ENCODE measurements at regions of chr10 and their contacts with region 1.

Region 1: DNA sequence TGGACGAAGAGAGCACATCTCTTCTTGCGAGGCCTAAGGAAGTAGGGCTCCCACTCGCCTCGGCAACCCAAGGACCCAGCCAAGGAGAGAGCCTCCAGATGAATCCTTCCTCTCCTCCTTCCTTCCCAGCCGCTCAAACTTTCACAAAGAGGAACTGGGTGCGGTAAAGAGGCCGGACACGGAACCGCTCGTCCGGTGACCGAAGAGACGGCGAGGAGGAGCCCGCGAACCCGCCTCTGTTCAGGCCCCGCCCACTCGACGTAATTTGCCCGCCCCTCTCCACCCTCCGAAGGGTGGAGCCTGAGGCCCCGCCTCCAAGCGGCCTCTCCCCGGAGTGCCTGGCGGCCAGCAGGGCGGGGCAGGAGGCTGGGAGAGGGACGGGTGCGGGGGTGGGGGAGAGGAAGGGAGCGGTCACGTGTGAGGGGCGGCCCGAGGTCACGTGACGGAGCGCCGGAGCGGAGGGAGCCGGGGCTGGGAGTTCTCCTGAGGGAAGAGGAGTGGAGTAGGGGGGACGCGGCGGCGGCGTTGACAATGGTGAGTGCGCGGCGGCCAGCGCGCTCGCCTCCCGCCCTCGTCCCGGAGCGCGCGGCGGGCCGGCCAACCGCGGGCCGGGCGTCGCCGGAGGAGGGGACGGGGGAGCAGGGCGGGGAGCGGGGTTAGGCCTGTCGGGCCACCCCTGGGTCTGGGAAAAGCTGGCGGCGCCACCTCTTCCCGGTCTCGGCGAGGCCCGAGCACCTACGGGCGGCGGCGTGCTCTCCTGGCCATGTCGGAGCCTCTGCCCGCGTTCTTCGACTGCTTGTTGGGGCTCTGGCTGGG is at the start of gene VPS26A:
- DNase-seq: peak; percentile 99
- H3K4me3 Mint-ChIP-seq: peak within 1 kb of the TSS; percentile 87
- H3K27ac Mint-ChIP-seq: peak within 1 kb of the TSS; percentile 88
- H3K4me1 Mint-ChIP-seq: peaks cover 21% of the 10 kb centered on the region
- H3K27me3 Mint-ChIP-seq: no peaks in the 10 kb centered on the region
- total RNA-seq, gene VPS26A: 24.7 and 24.8 TPM in 2 replicates

Region 2: DNA sequence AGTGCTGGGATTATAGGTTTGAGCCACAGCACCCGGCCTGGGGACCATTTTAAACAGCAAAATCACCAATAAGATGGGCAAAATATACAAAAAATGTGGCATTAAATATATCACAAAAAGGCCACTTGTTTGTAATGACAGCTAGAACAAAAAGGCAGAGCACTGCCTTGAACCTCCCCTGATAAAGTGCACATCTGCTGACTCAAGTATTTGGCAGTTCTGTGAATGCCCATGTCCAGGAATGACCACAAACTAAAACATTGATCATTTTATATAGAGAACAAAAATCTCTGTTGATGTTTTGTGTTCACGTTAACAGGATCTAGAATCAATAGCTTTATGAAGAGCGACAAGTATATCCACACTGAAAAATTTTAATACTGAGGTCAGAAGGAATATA is 1070.4 kb before region 1 on chr10:
- intact Hi-C with region 1: no loop called
- DNase-seq: no peak
- H3K4me3 Mint-ChIP-seq: no peak overlapping the region
- H3K27ac Mint-ChIP-seq: no peak overlapping the region
- H3K4me1 Mint-ChIP-seq: peaks cover 16% of the 10 kb centered on the region
- H3K27me3 Mint-ChIP-seq: no peaks in the 10 kb centered on the region

Region 3: DNA sequence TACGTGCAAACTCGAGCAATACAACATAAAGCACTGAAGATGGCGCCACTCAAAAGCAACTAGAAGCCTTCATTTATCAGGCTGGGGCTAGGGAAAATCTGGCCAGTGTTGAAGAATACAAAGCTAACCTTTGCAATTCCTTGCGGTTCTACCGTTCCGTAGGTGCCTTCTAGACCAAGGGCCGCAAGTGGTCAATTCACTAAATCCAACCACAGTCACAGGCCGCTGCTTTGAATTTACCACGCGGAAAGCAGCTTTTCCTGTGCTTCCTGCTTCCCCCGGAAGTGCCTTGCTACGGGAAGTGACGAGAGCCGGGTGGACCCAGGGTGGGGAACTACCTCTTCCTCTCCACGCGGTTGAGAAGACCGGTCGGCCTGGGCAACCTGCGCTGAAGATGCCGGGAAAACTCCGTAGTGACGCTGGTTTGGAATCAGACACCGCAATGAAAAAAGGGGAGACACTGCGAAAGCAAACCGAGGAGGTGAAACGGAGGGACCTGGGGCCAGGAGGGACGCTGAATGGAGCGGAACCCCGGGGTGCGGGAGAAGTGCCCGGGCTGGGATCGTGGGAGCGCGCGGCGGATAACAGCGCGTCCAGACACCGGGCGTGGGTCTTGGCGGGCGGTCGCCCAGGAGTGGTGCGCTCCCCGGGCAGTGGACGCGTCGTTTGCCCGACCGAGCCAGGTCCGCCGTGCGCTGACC is 168.0 kb before region 1 on chr10 and contains the start of gene DDX21:
- intact Hi-C with region 1: loop called (anchors 1 kb)
- DNase-seq: peak; percentile 87
- H3K4me3 Mint-ChIP-seq: peak within 1 kb of the TSS; percentile 99
- H3K27ac Mint-ChIP-seq: peak within 1 kb of the TSS; percentile 99
- H3K4me1 Mint-ChIP-seq: peaks cover 25% of the 10 kb centered on the region
- H3K27me3 Mint-ChIP-seq: no peaks in the 10 kb centered on the region
- total RNA-seq, gene DDX21: 267 and 278 TPM in 2 replicates

Region 4: GRCh38 chr10:68997211-68997610 is 126.7 kb before region 1 on chr10:
- intact Hi-C with region 1: loop called (anchors 2 kb)
- DNase-seq: no peak
- H3K4me3 Mint-ChIP-seq: peak overlapping the region; percentile 16
- H3K27ac Mint-ChIP-seq: peak overlapping the region; percentile 86
- H3K4me1 Mint-ChIP-seq: peaks cover 35% of the 10 kb centered on the region
- H3K27me3 Mint-ChIP-seq: no peaks in the 10 kb centered on the region

Region 5: GRCh38 chr10:69045441-69046300 is 78.3 kb before region 1 on chr10:
- intact Hi-C with region 1: loop called (anchors 1 kb)
- DNase-seq: peak; percentile 42
- H3K4me3 Mint-ChIP-seq: peak overlapping the region; percentile 76
- H3K27ac Mint-ChIP-seq: peak overlapping the region; percentile 99
- H3K4me1 Mint-ChIP-seq: peaks cover 54% of the 10 kb centered on the region
- H3K27me3 Mint-ChIP-seq: no peaks in the 10 kb centered on the region

Region 6: DNA sequence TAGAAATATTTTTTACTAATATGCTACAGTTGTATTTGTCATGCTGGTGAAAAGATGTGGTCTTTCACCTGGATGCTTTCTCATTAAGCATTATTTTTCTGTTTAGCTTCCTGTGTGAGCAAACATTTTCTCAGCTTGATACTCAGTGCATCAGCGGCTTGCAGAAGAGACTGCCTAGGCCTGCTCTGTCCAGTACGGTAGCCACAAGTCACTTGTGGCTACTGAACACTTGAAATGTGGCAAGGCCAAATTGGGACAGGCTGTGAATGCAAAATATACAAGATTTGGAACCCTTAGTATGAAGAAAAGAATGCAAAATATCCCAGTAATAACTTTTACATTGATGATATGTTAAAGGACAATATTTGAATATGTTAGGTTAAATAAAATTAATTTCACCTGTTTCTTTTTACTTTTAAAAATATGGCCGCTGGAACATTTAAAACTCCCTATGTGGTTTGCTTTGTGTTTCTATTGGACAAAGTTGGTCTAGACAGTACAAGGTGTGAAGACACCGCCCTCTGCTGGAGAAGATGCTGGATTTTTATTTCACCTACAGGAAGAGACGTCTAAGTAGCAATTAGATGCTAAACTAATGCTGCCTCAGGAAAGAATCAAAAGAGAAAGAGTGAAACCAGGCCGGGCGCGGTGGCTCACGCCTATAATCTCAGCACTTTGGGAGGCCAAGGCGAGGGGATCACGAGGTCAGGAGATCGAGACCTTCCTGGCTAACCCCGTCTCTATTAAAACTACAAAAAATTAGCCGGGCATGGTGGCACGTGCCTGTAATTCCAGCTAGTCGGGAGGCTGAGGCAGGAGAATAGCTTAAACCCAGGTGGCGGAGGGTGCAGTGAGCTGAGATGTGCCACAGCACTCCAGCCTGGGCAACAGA is 30.8 kb before region 1 on chr10:
- intact Hi-C with region 1: loop called (anchors 1 kb)
- DNase-seq: peak; percentile 80
- H3K4me3 Mint-ChIP-seq: peak overlapping the region; percentile 45
- H3K27ac Mint-ChIP-seq: peak overlapping the region; percentile 72
- H3K4me1 Mint-ChIP-seq: peaks cover 51% of the 10 kb centered on the region
- H3K27me3 Mint-ChIP-seq: no peaks in the 10 kb centered on the region

Region 7: GRCh38 chr10:69237528-69238159 is 113.7 kb after region 1 on chr10:
- intact Hi-C with region 1: no loop called
- DNase-seq: peak; percentile 78
- H3K4me3 Mint-ChIP-seq: no peak overlapping the region
- H3K27ac Mint-ChIP-seq: no peak overlapping the region
- H3K4me1 Mint-ChIP-seq: peaks cover 15% of the 10 kb centered on the region
- H3K27me3 Mint-ChIP-seq: peaks cover 2% of the 10 kb centered on the region

Region 8: GRCh38 chr10:69392481-69393000 is 268.6 kb after region 1 on chr10:
- intact Hi-C with region 1: loop called (anchors 2 kb)
- DNase-seq: peak; percentile 74
- H3K4me3 Mint-ChIP-seq: no peak overlapping the region
- H3K27ac Mint-ChIP-seq: peak overlapping the region; percentile 63
- H3K4me1 Mint-ChIP-seq: peaks cover 39% of the 10 kb centered on the region
- H3K27me3 Mint-ChIP-seq: no peaks in the 10 kb centered on the region

Measured in activated T-helper 1 cell treated with anti-CD3 and anti-CD28 coated beads, Interleukin-12 subunit alpha, Interleukin-12 subunit beta, Interleukin-2, Interleukin-4 antibody, amounts not matched to agents 30 ng/mL and 10 ng/mL and 1 ng/mL, durations not matched to agents 14 hours and 24 hours and 36 hours (primary cell).